PC-9 (cell line): ENCODE measurements at regions of chr16 and their contacts with region 1.

Region 1: GRCh38 chr16:49194537-49195236 is 87.0 kb downstream of the CBLN1 start:
- DNase-seq: no peak
- H3K4me3 ChIP-seq: no peak overlapping the region
- H3K27ac ChIP-seq: no peak overlapping the region
- H3K4me1 ChIP-seq: no peaks in the 10 kb centered on the region
- H3K27me3 ChIP-seq: no peaks in the 10 kb centered on the region
- CTCF ChIP-seq: no peak

Region 2: GRCh38 chr16:49067776-49068175 is 126.9 kb before region 1 on chr16:
- CTCF ChIA-PET with region 1: no interaction called
- POLR2A ChIA-PET with region 1: no interaction called
- intact Hi-C with region 1: no loop called
- DNase-seq: no peak
- H3K4me3 ChIP-seq: no peak overlapping the region
- H3K27ac ChIP-seq: no peak overlapping the region
- H3K4me1 ChIP-seq: no peaks in the 10 kb centered on the region
- H3K27me3 ChIP-seq: peaks cover 12% of the 10 kb centered on the region
- CTCF ChIP-seq: no peak

Region 3: DNA sequence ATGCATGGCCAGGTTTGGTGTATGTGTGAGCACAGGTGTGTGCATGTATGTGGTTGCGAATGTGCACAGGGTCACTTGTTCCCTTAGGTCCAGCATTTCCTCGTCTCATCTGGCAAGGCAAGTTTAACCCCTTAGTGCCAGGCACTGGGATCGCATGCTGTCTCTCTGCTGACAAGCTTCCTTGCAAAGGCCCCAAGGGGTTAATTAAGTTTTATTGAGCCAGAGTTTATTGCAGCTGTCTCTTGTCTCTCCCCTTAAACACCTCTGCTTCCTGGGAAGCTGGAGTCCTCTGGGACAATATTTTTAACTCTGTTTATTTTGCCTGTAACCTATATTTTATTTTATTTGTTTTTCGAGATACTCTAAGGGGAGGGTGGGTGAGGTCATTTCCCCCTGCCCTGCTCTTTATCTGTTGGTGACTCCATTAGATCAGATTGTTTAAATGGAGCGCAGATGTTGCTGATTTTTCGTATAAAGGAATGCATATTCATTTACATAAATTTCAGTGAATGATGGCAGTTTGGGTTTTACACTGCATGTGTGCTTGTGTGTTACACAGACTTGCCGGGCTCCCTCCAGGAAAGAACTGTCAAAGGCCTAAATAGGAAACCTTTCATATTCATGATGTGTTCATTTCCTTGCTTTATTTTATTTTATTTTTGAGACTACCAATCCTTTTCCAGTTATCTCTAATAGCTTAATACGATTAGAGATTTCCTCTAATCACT is 12.7 kb before region 1 on chr16:
- CTCF ChIA-PET with region 1: no interaction called
- POLR2A ChIA-PET with region 1: no interaction called
- intact Hi-C with region 1: no loop called
- DNase-seq: no peak
- H3K4me3 ChIP-seq: no peak overlapping the region
- H3K27ac ChIP-seq: no peak overlapping the region
- H3K4me1 ChIP-seq: no peaks in the 10 kb centered on the region
- H3K27me3 ChIP-seq: no peaks in the 10 kb centered on the region
- CTCF ChIP-seq: no peak

Region 4: GRCh38 chr16:50861970-50862411 is 1667.3 kb after region 1 on chr16:
- CTCF ChIA-PET with region 1: no interaction called
- POLR2A ChIA-PET with region 1: interaction called, 20 read pairs
- intact Hi-C with region 1: no loop called
- DNase-seq: peak in 1 of 2 experiments; percentile 62
- H3K4me3 ChIP-seq: no peak overlapping the region
- H3K27ac ChIP-seq: no peak overlapping the region
- H3K4me1 ChIP-seq: peaks cover 12% of the 10 kb centered on the region
- H3K27me3 ChIP-seq: no peaks in the 10 kb centered on the region
- CTCF ChIP-seq: no peak